Breast epithelium (tissue), 4 donors: ENCODE measurements at regions of chr3 and their contacts with region 1.

Region 1: DNA sequence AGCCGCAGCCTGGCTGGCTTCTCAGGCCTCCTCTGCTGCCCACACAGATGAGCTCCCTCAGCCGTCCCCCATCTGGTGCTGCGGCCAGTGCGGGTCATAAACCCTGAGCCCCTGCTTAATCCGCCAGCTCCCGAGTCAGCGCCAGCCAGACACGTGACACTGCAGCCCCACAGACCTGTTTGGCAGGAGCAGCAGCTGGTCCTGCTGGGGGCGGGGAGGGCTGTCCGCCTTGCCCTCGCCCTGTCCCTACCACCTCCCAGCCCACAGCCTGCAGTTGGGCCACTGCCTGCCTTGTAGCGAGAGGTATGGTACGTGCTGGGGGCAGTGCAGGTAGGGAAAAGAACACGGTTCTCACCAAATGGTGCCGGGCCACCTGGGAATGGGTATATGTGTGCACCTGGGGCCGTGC is 86.2 kb downstream of the IQSEC1 start:
- DNase-seq: no peak
- H3K4me3 ChIP-seq: no peak overlapping the region
- H3K27ac ChIP-seq: no peak overlapping the region
- H3K4me1 ChIP-seq: no peaks in the 10 kb centered on the region
- H3K27me3 ChIP-seq: no peaks in the 10 kb centered on the region
- CTCF ChIP-seq: no peak
- POLR2A ChIP-seq: no peak

Region 2: GRCh38 chr3:11648735-11649134 is 1338.3 kb before region 1 on chr3:
- intact Hi-C with region 1: loop called (anchors 5 kb)
- DNase-seq: no peak
- H3K4me3 ChIP-seq: no peak overlapping the region
- H3K27ac ChIP-seq: no peak overlapping the region
- H3K4me1 ChIP-seq: no peaks in the 10 kb centered on the region
- H3K27me3 ChIP-seq: no peaks in the 10 kb centered on the region
- CTCF ChIP-seq: no peak
- POLR2A ChIP-seq: no peak

Region 3: GRCh38 chr3:12999147-13000140 is 12.4 kb after region 1 on chr3:
- intact Hi-C with region 1: no loop called
- DNase-seq: peak in 1 of 2 donors; percentile 59
- H3K4me3 ChIP-seq: no peak overlapping the region
- H3K27ac ChIP-seq: peak overlapping the region in 1 of 2 donors; percentile 67
- H3K4me1 ChIP-seq: no peaks in the 10 kb centered on the region
- H3K27me3 ChIP-seq: no peaks in the 10 kb centered on the region
- CTCF ChIP-seq: no peak
- POLR2A ChIP-seq: no peak